Gastrocnemius medialis (tissue), 4 donors: ENCODE measurements at regions of chr3 and their contacts with region 1.

Region 1: DNA sequence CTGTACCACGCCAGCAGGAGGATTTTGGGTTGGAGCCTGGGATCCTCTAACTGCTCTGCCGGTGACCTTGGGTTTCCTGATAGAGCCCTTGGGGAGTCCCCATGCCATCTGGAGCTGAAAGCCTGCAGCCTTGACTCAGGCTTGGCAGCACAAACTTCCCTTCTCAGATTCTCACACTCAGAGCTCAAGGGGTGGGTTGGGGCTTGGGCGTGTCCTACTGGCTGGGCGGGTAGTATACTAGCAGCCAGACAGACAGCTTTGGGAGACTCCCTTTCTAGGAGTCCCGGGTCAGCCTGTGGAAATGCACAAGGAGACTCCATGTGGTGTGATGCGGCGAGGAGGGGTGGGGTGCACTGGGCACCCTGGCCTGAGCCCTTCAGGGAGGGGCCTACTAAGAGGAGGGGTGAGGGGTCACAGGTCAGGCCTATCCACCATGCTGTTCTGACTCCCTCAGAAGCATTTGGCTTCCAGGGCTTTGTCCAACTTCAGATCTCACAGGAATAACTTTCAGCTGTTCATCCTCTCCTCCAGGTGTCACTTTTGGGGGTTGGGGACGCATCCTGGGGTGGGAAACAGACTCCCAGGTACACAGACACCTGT is 21.6 kb upstream of the PLXNA1 start:
- DNase-seq: peak; percentile 73 to 95
- ATAC-seq: peak; percentile 86 to 87
- H3K4me3 ChIP-seq: no peak overlapping the region
- H3K27ac ChIP-seq: peak overlapping the region; percentile 79 to 88 (median 82)
- H3K4me1 ChIP-seq: peaks cover 50 to 55% of the 10 kb centered on the region in 2 donors
- H3K27me3 ChIP-seq: no peaks in the 10 kb centered on the region
- CTCF ChIP-seq: no peak
- POLR2A ChIP-seq: no peak

Region 2: DNA sequence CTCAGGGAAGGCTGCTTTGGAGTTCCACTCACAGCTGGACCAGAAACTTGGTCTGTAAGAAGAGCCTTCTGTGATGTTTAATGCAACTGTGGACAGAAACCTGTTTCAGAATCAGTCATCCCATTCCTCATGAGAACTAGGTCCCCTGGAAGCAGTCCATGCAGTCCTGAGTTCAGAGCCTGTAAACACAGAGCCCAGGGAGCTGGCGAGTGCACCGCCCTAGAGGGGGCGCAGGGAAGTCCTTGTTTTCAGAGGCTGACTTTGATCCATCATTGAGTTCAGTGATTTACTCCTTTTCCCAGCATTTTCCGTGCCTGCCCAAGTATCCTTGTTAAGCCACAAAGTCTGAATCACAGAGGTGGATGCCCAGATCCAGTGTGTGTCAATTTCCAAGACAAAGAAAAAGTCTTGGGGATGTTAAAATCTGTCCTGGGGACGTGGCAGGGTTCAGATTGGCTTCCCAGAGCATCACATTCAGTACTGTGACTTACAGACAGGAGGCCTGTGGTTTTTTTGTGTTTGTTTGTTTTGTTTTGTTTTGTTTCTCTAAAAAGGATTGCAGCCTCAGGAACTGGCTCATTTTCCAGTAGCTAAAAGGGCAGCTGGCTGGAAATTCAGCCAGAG is 296.6 kb before region 1 on chr3:
- in situ Hi-C with region 1: no loop called
- intact Hi-C with region 1: no loop called
- DNase-seq: no peak
- ATAC-seq: no peak
- H3K4me3 ChIP-seq: no peak overlapping the region
- H3K27ac ChIP-seq: no peak overlapping the region
- H3K4me1 ChIP-seq: no peaks in the 10 kb centered on the region
- H3K27me3 ChIP-seq: no peaks in the 10 kb centered on the region
- CTCF ChIP-seq: no peak
- POLR2A ChIP-seq: no peak

Region 3: DNA sequence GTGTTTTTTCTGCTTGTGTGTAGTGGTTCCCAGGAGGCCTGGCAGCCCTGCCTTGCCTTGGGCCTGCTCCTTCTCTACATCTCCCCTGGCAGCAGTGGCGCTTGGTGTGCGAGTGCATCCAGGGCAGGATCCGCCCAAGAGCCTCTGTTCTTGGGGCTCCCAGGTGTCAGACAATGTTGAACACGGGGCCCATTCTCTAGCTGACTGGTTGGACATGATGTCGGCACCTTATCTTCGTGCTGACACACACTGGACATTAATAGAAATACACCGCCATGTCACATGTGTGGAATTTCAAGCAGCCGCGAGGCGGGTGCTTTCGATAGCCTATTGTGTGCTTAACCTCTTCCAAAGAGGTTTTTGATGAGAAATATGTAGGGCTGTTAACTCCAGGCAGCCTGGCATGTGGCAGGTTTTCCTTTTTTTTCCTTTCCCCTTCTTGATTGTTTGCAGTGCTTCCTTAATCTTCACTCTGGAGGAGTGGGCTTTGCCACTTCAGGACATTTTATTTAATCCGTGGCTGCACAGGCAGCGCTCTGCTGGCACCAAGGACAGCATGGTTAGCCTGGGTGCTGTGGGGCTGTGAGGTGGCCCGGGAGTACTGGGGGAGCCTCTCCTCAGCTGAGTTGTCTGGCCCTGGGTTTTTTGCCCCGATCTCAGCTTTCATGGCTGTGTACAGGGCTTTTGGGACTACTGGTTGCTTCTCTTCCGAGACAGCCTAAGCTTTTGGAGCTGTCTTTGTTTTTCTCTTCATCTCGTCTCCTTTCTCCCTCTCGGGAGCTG is 214.7 kb before region 1 on chr3:
- in situ Hi-C with region 1: loop called in 1 of 4 experiments (anchors 25 kb)
- intact Hi-C with region 1: loop called (anchors 5 kb)
- DNase-seq: peak; percentile 18 to 44
- ATAC-seq: peak; percentile 69 to 85
- H3K4me3 ChIP-seq: peak overlapping the region in 1 of 4 donors; percentile 14
- H3K27ac ChIP-seq: peak overlapping the region; percentile 55 to 76 (median 60)
- H3K4me1 ChIP-seq: peaks cover 18% of the 10 kb centered on the region in 2 donors
- H3K27me3 ChIP-seq: no peaks in the 10 kb centered on the region
- CTCF ChIP-seq: peak in 1 of 5 experiments; percentile 18
- POLR2A ChIP-seq: no peak

Region 4: GRCh38 chr3:126895178-126896066 is 65.9 kb before region 1 on chr3:
- in situ Hi-C with region 1: no loop called
- intact Hi-C with region 1: loop called (anchors 2 kb)
- DNase-seq: peak; percentile 50 to 69
- ATAC-seq: peak; percentile 62 to 81
- H3K4me3 ChIP-seq: no peak overlapping the region
- H3K27ac ChIP-seq: peak overlapping the region in 2 of 4 donors; percentile 14 to 65
- H3K4me1 ChIP-seq: peaks cover 38 to 47% of the 10 kb centered on the region in 2 donors
- H3K27me3 ChIP-seq: no peaks in the 10 kb centered on the region
- CTCF ChIP-seq: no peak
- POLR2A ChIP-seq: no peak